CD4-positive, alpha-beta memory T cell (primary cell): ENCODE measurements at regions of chr18 and their contacts with region 1.

Region 1: GRCh38 chr18:22517356-22517755 is 99.6 kb upstream of the CTAGE1 start:
- DNase-seq: no peak
- H3K4me3 ChIP-seq: no peak overlapping the region
- H3K4me3 Mint-ChIP-seq: no peak overlapping the region
- H3K27ac ChIP-seq: no peak overlapping the region
- H3K27ac Mint-ChIP-seq: no peak overlapping the region
- H3K4me1 ChIP-seq: no peaks in the 10 kb centered on the region
- H3K4me1 Mint-ChIP-seq: no peaks in the 10 kb centered on the region
- H3K27me3 ChIP-seq: no peaks in the 10 kb centered on the region
- H3K27me3 Mint-ChIP-seq: peaks cover 0 to 8% of the 10 kb centered on the region in 2 donors

Region 2: GRCh38 chr18:22314420-22314819 is 202.9 kb before region 1 on chr18:
- CTCF ChIA-PET with region 1: no interaction called
- POLR2A ChIA-PET with region 1: no interaction called
- intact Hi-C with region 1: no loop called
- DNase-seq: no peak
- H3K4me3 ChIP-seq: no peak overlapping the region
- H3K4me3 Mint-ChIP-seq: no peak overlapping the region
- H3K27ac ChIP-seq: no peak overlapping the region
- H3K27ac Mint-ChIP-seq: no peak overlapping the region
- H3K4me1 ChIP-seq: no peaks in the 10 kb centered on the region
- H3K4me1 Mint-ChIP-seq: no peaks in the 10 kb centered on the region
- H3K27me3 ChIP-seq: no peaks in the 10 kb centered on the region
- H3K27me3 Mint-ChIP-seq: no peaks in the 10 kb centered on the region

Region 3: GRCh38 chr18:22570492-22570891 is 53.1 kb after region 1 on chr18:
- CTCF ChIA-PET with region 1: no interaction called
- POLR2A ChIA-PET with region 1: no interaction called
- intact Hi-C with region 1: loop called (anchors 10 kb)
- DNase-seq: no peak
- H3K4me3 ChIP-seq: no peak overlapping the region
- H3K4me3 Mint-ChIP-seq: no peak overlapping the region
- H3K27ac ChIP-seq: no peak overlapping the region
- H3K27ac Mint-ChIP-seq: no peak overlapping the region
- H3K4me1 ChIP-seq: no peaks in the 10 kb centered on the region
- H3K4me1 Mint-ChIP-seq: no peaks in the 10 kb centered on the region
- H3K27me3 ChIP-seq: no peaks in the 10 kb centered on the region
- H3K27me3 Mint-ChIP-seq: peaks cover 1 to 4% of the 10 kb centered on the region in 2 donors